Activated CD4-positive, alpha-beta memory T cell treated with anti-CD3 and anti-CD28 coated beads for 36 hours (primary cell): ENCODE measurements at regions of chr9 and their contacts with region 1.

Region 1: GRCh38 chr9:75027187-75028107 is 646 bp downstream of the CARNMT1 start:
- DNase-seq: peak; percentile 68
- H3K4me3 Mint-ChIP-seq: peak overlapping the region; percentile 99
- H3K27ac Mint-ChIP-seq: peak overlapping the region; percentile 97
- H3K4me1 Mint-ChIP-seq: peaks cover 35% of the 10 kb centered on the region
- H3K27me3 Mint-ChIP-seq: no peaks in the 10 kb centered on the region

Region 2: GRCh38 chr9:73149371-73150067 is 1877.9 kb before region 1 on chr9:
- CTCF ChIA-PET with region 1: no interaction called
- POLR2A ChIA-PET with region 1: no interaction called
- intact Hi-C with region 1: loop called (anchors 10 kb)
- DNase-seq: no peak
- H3K4me3 Mint-ChIP-seq: peak overlapping the region; percentile 55
- H3K27ac Mint-ChIP-seq: peak overlapping the region; percentile 86
- H3K4me1 Mint-ChIP-seq: peaks cover 66% of the 10 kb centered on the region
- H3K27me3 Mint-ChIP-seq: no peaks in the 10 kb centered on the region

Region 3: GRCh38 chr9:75001719-75002422 is 25.6 kb before region 1 on chr9:
- CTCF ChIA-PET with region 1: interaction called, 18 read pairs
- POLR2A ChIA-PET with region 1: no interaction called
- intact Hi-C with region 1: no loop called
- DNase-seq: no peak
- H3K4me3 Mint-ChIP-seq: no peak overlapping the region
- H3K27ac Mint-ChIP-seq: no peak overlapping the region
- H3K4me1 Mint-ChIP-seq: peaks cover 5% of the 10 kb centered on the region
- H3K27me3 Mint-ChIP-seq: no peaks in the 10 kb centered on the region

Region 4: DNA sequence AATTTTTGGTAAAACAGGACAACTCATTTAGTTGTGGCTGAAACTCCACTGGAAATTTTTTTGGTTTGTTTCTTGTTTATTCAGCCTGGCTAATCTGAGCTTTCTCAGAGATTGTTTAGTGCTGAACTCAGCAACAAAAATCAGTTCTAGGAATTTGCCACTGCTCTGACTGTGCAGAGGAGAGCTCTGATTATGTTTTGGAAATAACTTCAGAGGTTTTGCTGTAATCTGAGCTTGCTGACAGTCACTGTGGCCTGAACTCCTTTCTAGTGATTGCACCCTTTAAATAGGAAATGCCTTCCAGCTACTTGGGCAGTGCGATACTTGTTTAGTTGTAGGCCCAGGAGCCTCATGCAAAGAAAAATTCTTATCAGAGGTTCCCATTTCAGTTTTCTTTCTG is 121.1 kb after region 1 on chr9:
- CTCF ChIA-PET with region 1: no interaction called
- POLR2A ChIA-PET with region 1: interaction called, 5 read pairs
- intact Hi-C with region 1: loop called (anchors 1 kb)
- DNase-seq: peak; percentile 41
- H3K4me3 Mint-ChIP-seq: no peak overlapping the region
- H3K27ac Mint-ChIP-seq: peak overlapping the region; percentile 82
- H3K4me1 Mint-ChIP-seq: peaks cover 69% of the 10 kb centered on the region
- H3K27me3 Mint-ChIP-seq: no peaks in the 10 kb centered on the region

Region 5: GRCh38 chr9:76458903-76459690 is 1431.7 kb after region 1 on chr9 and contains the start of gene GCNT1:
- CTCF ChIA-PET with region 1: no interaction called
- POLR2A ChIA-PET with region 1: interaction called, 3 read pairs
- intact Hi-C with region 1: loop called (anchors 5 kb)
- DNase-seq: peak; percentile 94
- H3K4me3 Mint-ChIP-seq: peak within 1 kb of the TSS; percentile 94
- H3K27ac Mint-ChIP-seq: peak within 1 kb of the TSS; percentile 49
- H3K4me1 Mint-ChIP-seq: peaks cover 18% of the 10 kb centered on the region
- H3K27me3 Mint-ChIP-seq: no peaks in the 10 kb centered on the region
- total RNA-seq, gene GCNT1: 6.7 to 6.9 TPM